CD4-positive, alpha-beta memory T cell (primary cell): ENCODE measurements at regions of chr17 and their contacts with region 1.

Region 1: DNA sequence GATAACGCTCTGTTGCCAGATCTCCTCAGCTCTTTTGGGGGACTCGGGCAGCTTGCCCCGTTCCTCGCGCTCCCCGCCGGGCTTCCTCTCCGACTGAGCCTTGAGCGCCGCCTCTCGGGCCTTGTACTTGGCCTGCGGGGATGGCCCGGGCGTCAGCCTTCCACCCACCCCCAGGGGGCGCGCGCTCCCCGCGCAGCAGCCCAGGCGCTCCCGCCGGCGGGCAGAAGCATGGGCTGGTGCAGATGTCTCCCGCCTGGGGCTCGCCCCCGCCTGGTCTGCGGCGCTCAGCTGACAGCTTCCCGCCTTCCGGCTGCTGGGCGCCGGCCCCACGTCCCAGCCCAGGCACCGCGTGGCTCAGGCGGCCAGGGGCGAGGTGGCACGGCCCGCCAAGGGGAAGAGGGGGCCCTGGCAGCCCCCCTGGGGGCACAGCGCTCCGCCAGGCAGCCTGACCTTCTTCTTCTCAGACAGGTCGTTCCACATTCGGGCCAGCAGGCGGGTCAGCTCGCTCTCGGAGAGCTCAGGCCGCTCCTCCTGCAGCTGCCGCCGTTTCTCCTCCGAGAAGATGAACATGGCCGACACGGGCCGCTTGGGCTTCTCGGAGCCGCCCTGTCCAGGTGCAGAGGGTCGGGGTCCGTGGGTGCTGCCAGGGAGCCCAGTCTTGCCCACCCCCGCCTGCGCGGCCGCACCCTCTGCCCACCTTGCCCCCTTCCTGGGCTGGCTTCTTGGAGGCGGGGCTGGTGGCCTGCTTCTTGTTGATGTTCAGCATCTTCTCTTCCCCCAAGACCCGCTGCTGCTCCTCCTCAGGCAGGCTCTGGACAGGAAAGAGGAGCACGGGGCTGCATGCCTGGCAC is 8.9 kb downstream of the UBTF start:
- DNase-seq: peak; percentile 86 to 93 (median 92)
- H3K4me3 ChIP-seq: no peak overlapping the region
- H3K4me3 Mint-ChIP-seq: peak overlapping the region in 6 of 8 donors; percentile 11 to 78 (median 54)
- H3K27ac ChIP-seq: peak overlapping the region; percentile 47
- H3K27ac Mint-ChIP-seq: peak overlapping the region; percentile 25 to 91 (median 76)
- H3K4me1 ChIP-seq: peaks cover 44% of the 10 kb centered on the region
- H3K4me1 Mint-ChIP-seq: peaks cover 25 to 64% (median 36%) of the 10 kb centered on the region in 4 donors
- H3K27me3 ChIP-seq: no peaks in the 10 kb centered on the region
- H3K27me3 Mint-ChIP-seq: no peaks in the 10 kb centered on the region

Region 2: GRCh38 chr17:44095642-44096496 is 114.7 kb before region 1 on chr17:
- CTCF ChIA-PET with region 1: no interaction called
- POLR2A ChIA-PET with region 1: no interaction called
- intact Hi-C with region 1: no loop called
- DNase-seq: peak in 1 of 5 donors; percentile 20
- H3K4me3 ChIP-seq: no peak overlapping the region
- H3K4me3 Mint-ChIP-seq: no peak overlapping the region
- H3K27ac ChIP-seq: no peak overlapping the region
- H3K27ac Mint-ChIP-seq: peak overlapping the region in 2 of 7 donors; percentile 37 to 46
- H3K4me1 ChIP-seq: peaks cover 7% of the 10 kb centered on the region
- H3K4me1 Mint-ChIP-seq: peaks cover 0 to 16% (median 3%) of the 10 kb centered on the region in 4 donors
- H3K27me3 ChIP-seq: no peaks in the 10 kb centered on the region
- H3K27me3 Mint-ChIP-seq: no peaks in the 10 kb centered on the region

Region 3: GRCh38 chr17:44186307-44187130 is 24.0 kb before region 1 on chr17 and contains the start of gene TMUB2:
- CTCF ChIA-PET with region 1: interaction called, 32 read pairs
- POLR2A ChIA-PET with region 1: interaction called, 23 read pairs
- intact Hi-C with region 1: no loop called
- DNase-seq: peak; percentile 99 to 100 (median 99)
- H3K4me3 ChIP-seq: peak within 1 kb of the TSS; percentile 96 to 98
- H3K4me3 Mint-ChIP-seq: peak within 1 kb of the TSS; percentile 97 to 100 (median 99)
- H3K27ac ChIP-seq: peak within 1 kb of the TSS; percentile 98
- H3K27ac Mint-ChIP-seq: peak within 1 kb of the TSS; percentile 96 to 100 (median 100)
- H3K4me1 ChIP-seq: peaks cover 44% of the 10 kb centered on the region
- H3K4me1 Mint-ChIP-seq: peaks cover 34 to 67% (median 51%) of the 10 kb centered on the region in 4 donors
- H3K27me3 ChIP-seq: no peaks in the 10 kb centered on the region
- H3K27me3 Mint-ChIP-seq: no peaks in the 10 kb centered on the region
- total RNA-seq, gene TMUB2: 45.4 to 47.9 TPM

Region 4: GRCh38 chr17:44223541-44224071 is 13.0 kb after region 1 on chr17:
- CTCF ChIA-PET with region 1: interaction called, 48 read pairs
- POLR2A ChIA-PET with region 1: interaction called, 174 read pairs
- intact Hi-C with region 1: loop called (anchors 1 kb)
- DNase-seq: no peak
- H3K4me3 ChIP-seq: no peak overlapping the region
- H3K4me3 Mint-ChIP-seq: peak overlapping the region in 2 of 8 donors; percentile 46 to 63
- H3K27ac ChIP-seq: no peak overlapping the region
- H3K27ac Mint-ChIP-seq: peak overlapping the region in 5 of 7 donors; percentile 2 to 67 (median 46)
- H3K4me1 ChIP-seq: peaks cover 13% of the 10 kb centered on the region
- H3K4me1 Mint-ChIP-seq: peaks cover 4 to 24% (median 10%) of the 10 kb centered on the region in 4 donors
- H3K27me3 ChIP-seq: no peaks in the 10 kb centered on the region
- H3K27me3 Mint-ChIP-seq: no peaks in the 10 kb centered on the region

Region 5: GRCh38 chr17:44324571-44325275 is 114.2 kb after region 1 on chr17 and contains the start of gene SLC25A39:
- CTCF ChIA-PET with region 1: interaction called, 107 read pairs
- POLR2A ChIA-PET with region 1: interaction called, 209 read pairs
- intact Hi-C with region 1: no loop called
- DNase-seq: peak; percentile 88 to 98 (median 94)
- H3K4me3 ChIP-seq: peak within 1 kb of the TSS; percentile 47 to 76
- H3K4me3 Mint-ChIP-seq: peak within 1 kb of the TSS; percentile 91 to 96 (median 92)
- H3K27ac ChIP-seq: peak within 1 kb of the TSS; percentile 91
- H3K27ac Mint-ChIP-seq: peak within 1 kb of the TSS; percentile 97 to 99 (median 98)
- H3K4me1 ChIP-seq: peaks cover 13% of the 10 kb centered on the region
- H3K4me1 Mint-ChIP-seq: peaks cover 7 to 41% (median 23%) of the 10 kb centered on the region in 4 donors
- H3K27me3 ChIP-seq: no peaks in the 10 kb centered on the region
- H3K27me3 Mint-ChIP-seq: no peaks in the 10 kb centered on the region
- total RNA-seq, gene SLC25A39: 91.2 to 94.4 TPM

Region 6: GRCh38 chr17:44344939-44345453 is 134.4 kb after region 1 on chr17 and contains the start of gene GRN:
- CTCF ChIA-PET with region 1: interaction called, 41 read pairs
- POLR2A ChIA-PET with region 1: interaction called, 12 read pairs
- intact Hi-C with region 1: no loop called
- DNase-seq: peak; percentile 81 to 87 (median 84)
- H3K4me3 ChIP-seq: peak within 1 kb of the TSS; percentile 90 to 97
- H3K4me3 Mint-ChIP-seq: peak within 1 kb of the TSS; percentile 90 to 97 (median 92)
- H3K27ac ChIP-seq: peak within 1 kb of the TSS; percentile 57
- H3K27ac Mint-ChIP-seq: peak within 1 kb of the TSS; percentile 69 to 88 (median 82)
- H3K4me1 ChIP-seq: peaks cover 10% of the 10 kb centered on the region
- H3K4me1 Mint-ChIP-seq: peaks cover 10 to 31% (median 19%) of the 10 kb centered on the region in 4 donors
- H3K27me3 ChIP-seq: no peaks in the 10 kb centered on the region
- H3K27me3 Mint-ChIP-seq: peaks cover 0 to 6% of the 10 kb centered on the region in 2 donors
- total RNA-seq, gene GRN: 49.5 to 50.0 TPM